ENCODE measurements at regions of chr19 and their contacts with region 1.

Region 1: GRCh38 chr19:9674663-9675357 is at the start of gene ZNF562:
- DNase-seq: peak; percentile 81 to 88 (median 83)
- H3K4me3 ChIP-seq: peak within 1 kb of the TSS; percentile 83 to 97 (median 88)
- H3K4me3 Mint-ChIP-seq: peak within 1 kb of the TSS; percentile 93 to 99
- H3K27ac ChIP-seq: peak within 1 kb of the TSS; percentile 86 to 98
- H3K27ac Mint-ChIP-seq: peak within 1 kb of the TSS; percentile 98 to 100 (median 99)
- H3K4me1 ChIP-seq: peaks cover 0 to 13% of the 10 kb centered on the region in 2 donors
- H3K4me1 Mint-ChIP-seq: peaks cover 7% of the 10 kb centered on the region
- H3K27me3 ChIP-seq: no peaks in the 10 kb centered on the region
- H3K27me3 Mint-ChIP-seq: peaks cover 0 to 5% (median 3%) of the 10 kb centered on the region in 3 donors
- CTCF ChIP-seq: no peak
- polyA plus RNA-seq, gene ZNF562: 3.3 to 7.9 (median 5.1) TPM

Region 2: DNA sequence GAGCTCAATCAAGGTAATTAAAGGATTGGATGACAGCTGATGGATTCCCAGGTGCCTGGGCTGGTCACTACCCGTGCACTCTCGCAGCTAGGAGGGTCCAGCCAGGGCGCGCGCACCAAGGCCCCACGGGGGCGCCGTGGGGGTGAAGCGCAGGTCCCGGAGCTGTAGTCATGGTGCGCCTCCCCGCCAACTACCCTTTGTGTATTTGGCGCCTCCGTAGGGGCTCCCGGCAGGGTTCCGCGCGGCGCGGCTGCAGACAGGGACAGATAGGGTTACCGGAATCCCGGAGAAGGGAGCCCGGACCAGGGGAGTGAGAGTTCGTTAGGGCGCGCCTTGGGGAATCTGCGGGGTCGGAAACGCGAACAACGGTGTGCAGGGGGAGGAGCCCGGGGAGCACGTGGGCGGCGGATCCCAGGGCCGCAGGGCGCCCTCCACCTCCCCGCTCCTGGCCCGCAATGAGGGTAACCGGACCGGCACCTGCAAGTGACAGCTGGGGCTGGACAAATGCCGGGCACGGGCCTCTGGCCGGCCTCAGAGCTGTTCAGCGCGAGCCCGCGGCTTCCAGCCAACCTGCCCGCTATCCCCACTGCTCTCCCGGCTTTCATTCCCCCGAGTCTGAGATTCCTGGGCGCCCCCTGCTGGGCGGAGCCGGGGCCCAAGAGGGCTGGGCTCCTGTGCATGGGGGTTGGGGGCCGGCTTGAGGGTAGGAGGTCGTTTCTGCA is 1169.0 kb before region 1 on chr19:
- intact Hi-C with region 1: no loop called
- DNase-seq: peak; percentile 55 to 63 (median 56)
- H3K4me3 ChIP-seq: peak overlapping the region; percentile 28 to 87 (median 52)
- H3K4me3 Mint-ChIP-seq: peak overlapping the region; percentile 88 to 91
- H3K27ac ChIP-seq: peak overlapping the region; percentile 58 to 83
- H3K27ac Mint-ChIP-seq: peak overlapping the region in 6 of 7 donors; percentile 66 to 98 (median 78)
- H3K4me1 ChIP-seq: peaks cover 57 to 67% of the 10 kb centered on the region in 2 donors
- H3K4me1 Mint-ChIP-seq: peaks cover 56% of the 10 kb centered on the region
- H3K27me3 ChIP-seq: no peaks in the 10 kb centered on the region
- H3K27me3 Mint-ChIP-seq: peaks cover 0 to 2% (median 0%) of the 10 kb centered on the region in 3 donors
- CTCF ChIP-seq: peak; percentile 90

Region 3: GRCh38 chr19:9323919-9324583 is 350.8 kb before region 1 on chr19 and contains the start of gene ZNF559:
- intact Hi-C with region 1: loop called (anchors 5 to 10 kb)
- DNase-seq: peak; percentile 93 to 95 (median 93)
- H3K4me3 ChIP-seq: peak within 1 kb of the TSS; percentile 73 to 90 (median 89)
- H3K4me3 Mint-ChIP-seq: peak within 1 kb of the TSS; percentile 92 to 98
- H3K27ac ChIP-seq: peak within 1 kb of the TSS; percentile 82 to 89
- H3K27ac Mint-ChIP-seq: peak within 1 kb of the TSS; percentile 89 to 96 (median 94)
- H3K4me1 ChIP-seq: peaks cover 14 to 20% of the 10 kb centered on the region in 2 donors
- H3K4me1 Mint-ChIP-seq: peaks cover 10% of the 10 kb centered on the region
- H3K27me3 ChIP-seq: no peaks in the 10 kb centered on the region
- H3K27me3 Mint-ChIP-seq: peaks cover 0 to 3% (median 2%) of the 10 kb centered on the region in 3 donors
- CTCF ChIP-seq: peak; percentile 37
- polyA plus RNA-seq, gene ZNF559: 9.0 to 16.0 (median 9.1) TPM

Region 4: GRCh38 chr19:9329999-9330398 is 344.8 kb before region 1 on chr19:
- intact Hi-C with region 1: loop called (anchors 5 to 10 kb)
- DNase-seq: no peak
- H3K4me3 ChIP-seq: no peak overlapping the region
- H3K4me3 Mint-ChIP-seq: no peak overlapping the region
- H3K27ac ChIP-seq: no peak overlapping the region
- H3K27ac Mint-ChIP-seq: no peak overlapping the region
- H3K4me1 ChIP-seq: peaks cover 0 to under 1% of the 10 kb centered on the region in 2 donors
- H3K4me1 Mint-ChIP-seq: no peaks in the 10 kb centered on the region
- H3K27me3 ChIP-seq: no peaks in the 10 kb centered on the region
- H3K27me3 Mint-ChIP-seq: peaks cover 0 to 2% (median 0%) of the 10 kb centered on the region in 3 donors
- CTCF ChIP-seq: no peak

Region 5: DNA sequence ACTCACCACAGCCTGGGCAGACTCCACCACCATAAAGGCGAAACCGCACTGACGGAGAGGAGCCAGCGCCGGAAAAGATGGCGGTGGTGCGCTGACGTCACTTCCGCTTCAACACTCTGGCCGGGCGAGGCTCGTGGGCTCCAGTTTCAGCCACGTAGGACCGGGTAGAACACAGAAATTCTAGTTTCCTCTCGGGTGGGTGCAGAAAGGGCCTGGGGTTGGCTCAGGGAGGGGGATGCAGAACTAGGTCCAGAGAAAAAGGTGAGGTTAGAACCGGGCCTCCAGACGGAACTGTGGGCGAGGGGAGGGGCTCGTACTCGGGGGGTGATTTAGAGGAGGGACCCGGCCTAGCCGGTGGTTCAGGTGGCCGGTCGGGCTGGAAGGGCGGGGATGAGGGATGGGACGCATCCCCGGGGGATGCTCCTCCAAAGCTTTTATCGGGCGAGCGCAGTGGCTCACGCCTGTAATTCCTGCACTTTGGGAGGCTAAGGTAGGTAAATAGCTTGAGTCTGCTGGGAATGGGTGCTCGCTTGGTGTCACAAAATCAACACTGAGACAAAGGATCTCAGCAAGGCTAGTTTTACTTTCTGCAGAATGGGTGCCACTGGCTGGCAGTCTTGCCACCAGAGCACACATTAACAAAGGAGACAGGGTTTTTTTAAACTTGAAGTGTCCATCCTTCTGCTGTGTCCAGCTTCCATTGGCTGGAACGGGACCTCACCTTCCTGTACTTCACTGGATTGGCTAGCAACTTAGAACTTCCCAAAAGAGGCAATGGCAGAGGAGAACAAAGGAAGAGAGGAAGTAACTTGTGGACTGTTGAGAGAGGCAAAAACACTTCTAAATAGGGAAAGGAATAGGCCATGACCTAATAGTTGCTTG is 53.4 kb before region 1 on chr19 and contains the start of gene ZNF561:
- intact Hi-C with region 1: loop called in 1 of 2 experiments (anchors 2 kb)
- DNase-seq: peak; percentile 83 to 89 (median 87)
- H3K4me3 ChIP-seq: peak within 1 kb of the TSS; percentile 75 to 99 (median 96)
- H3K4me3 Mint-ChIP-seq: peak within 1 kb of the TSS; percentile 99 to 100
- H3K27ac ChIP-seq: peak within 1 kb of the TSS; percentile 93 to 95
- H3K27ac Mint-ChIP-seq: peak within 1 kb of the TSS; percentile 99 to 100 (median 100)
- H3K4me1 ChIP-seq: peaks cover 23 to 25% of the 10 kb centered on the region in 2 donors
- H3K4me1 Mint-ChIP-seq: peaks cover 22% of the 10 kb centered on the region
- H3K27me3 ChIP-seq: no peaks in the 10 kb centered on the region
- H3K27me3 Mint-ChIP-seq: no peaks in the 10 kb centered on the region
- CTCF ChIP-seq: no peak
- polyA plus RNA-seq, gene ZNF561: 11.0 to 14.3 (median 12.5) TPM

Region 6: DNA sequence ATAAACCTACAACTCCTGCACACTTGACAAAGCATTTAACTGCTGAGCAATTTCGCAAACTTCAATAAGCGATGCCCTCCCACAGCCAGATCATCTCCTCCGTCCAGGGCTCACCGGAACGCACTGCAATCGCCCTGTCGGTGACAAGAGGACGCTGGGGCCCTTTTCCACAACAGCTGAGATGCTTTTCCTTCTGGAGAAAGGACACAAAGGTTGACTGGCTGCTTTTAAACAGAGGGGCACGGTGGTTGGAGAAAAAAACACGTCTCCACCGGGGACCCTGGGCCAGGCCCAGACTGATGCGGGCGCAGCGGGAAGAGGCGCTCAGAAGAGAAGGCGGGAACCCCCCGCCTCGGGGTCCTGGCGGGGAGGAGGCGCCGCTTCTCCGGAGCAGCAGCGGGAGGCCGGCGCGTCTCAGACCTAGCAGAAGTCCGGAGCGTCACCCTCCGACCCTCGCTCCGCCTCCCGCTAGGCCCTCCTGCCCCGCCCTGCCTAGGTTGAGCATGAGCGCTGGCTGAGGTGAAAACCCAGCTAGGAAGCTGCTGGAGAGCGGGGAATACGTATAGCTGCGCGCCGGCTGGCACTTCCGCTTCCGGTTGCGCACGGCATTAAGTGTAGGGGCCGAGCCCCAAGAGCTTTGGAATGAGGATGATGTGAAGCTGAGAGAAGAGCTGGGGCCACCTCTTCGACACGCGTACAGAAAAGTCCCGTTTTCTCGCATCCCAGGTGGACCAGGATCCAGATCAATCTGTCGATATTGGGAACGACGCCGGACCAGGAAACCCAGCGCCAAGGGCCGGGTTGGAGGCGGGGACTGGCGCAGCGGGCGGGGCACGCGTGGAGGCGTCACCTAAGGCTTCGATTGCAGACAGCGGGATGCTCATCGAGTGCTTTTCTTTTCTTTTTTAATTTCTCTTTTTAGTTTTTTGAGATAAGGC is 93.6 kb after region 1 on chr19 and contains the start of gene ZNF846:
- intact Hi-C with region 1: loop called (anchors 5 kb)
- DNase-seq: peak; percentile 93 to 95 (median 94)
- H3K4me3 ChIP-seq: peak within 1 kb of the TSS; percentile 47 to 94 (median 70)
- H3K4me3 Mint-ChIP-seq: peak within 1 kb of the TSS; percentile 90 to 97
- H3K27ac ChIP-seq: peak within 1 kb of the TSS; percentile 87 to 99
- H3K27ac Mint-ChIP-seq: peak within 1 kb of the TSS; percentile 97 to 99 (median 99)
- H3K4me1 ChIP-seq: peaks cover 15 to 16% of the 10 kb centered on the region in 2 donors
- H3K4me1 Mint-ChIP-seq: peaks cover 8% of the 10 kb centered on the region
- H3K27me3 ChIP-seq: no peaks in the 10 kb centered on the region
- H3K27me3 Mint-ChIP-seq: peaks cover 0 to 3% (median 0%) of the 10 kb centered on the region in 3 donors
- CTCF ChIP-seq: no peak
- polyA plus RNA-seq, gene ZNF846: 2.5 to 6.9 (median 6.5) TPM

Measured in CD14-positive monocyte (primary cell).